ENCODE measurements at regions of chr1 and their contacts with region 1.

Region 1: GRCh38 chr1:10387413-10388079 is 11.3 kb upstream of the PGD start:
- DNase-seq: no peak
- H3K4me3 ChIP-seq: peak overlapping the region in 1 of 2 experiments; percentile 51; a peak in 2 of 4 replicates
- H3K27ac ChIP-seq: peak overlapping the region; percentile 54 to 90
- H3K4me1 ChIP-seq: peaks cover 0 to 9% of the 10 kb centered on the region in 2 experiments; a peak in 1 of 4 replicates
- H3K27me3 ChIP-seq: no peaks in the 10 kb centered on the region
- CTCF ChIP-seq: peak; percentile 28; the same call in 1 of the 2 replicates
- EP300 ChIP-seq: no peak
- RAD21 ChIP-seq: no peak

Region 2: DNA sequence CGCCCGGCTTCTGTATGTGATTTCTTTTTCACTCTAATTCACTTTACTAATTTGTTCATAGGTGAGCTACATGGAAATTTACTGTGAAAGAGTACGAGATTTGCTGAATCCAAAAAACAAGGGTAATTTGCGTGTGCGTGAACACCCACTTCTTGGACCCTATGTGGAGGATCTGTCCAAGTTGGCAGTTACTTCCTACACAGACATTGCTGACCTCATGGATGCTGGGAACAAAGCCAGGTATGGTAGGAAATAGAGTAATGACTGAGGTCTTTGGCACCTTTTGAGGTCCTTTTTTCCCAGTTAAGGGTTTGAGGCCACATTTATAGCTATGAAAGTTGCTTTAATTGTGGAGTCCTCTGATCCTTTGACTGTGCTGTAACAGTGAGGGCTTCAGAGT is 120.2 kb before region 1 on chr1:
- CTCF ChIA-PET with region 1: no interaction called
- POLR2A ChIA-PET with region 1: no interaction called
- DNase-seq: no peak
- H3K4me3 ChIP-seq: no peak overlapping the region
- H3K27ac ChIP-seq: no peak overlapping the region
- H3K4me1 ChIP-seq: no peaks in the 10 kb centered on the region
- H3K27me3 ChIP-seq: no peaks in the 10 kb centered on the region
- CTCF ChIP-seq: no peak
- EP300 ChIP-seq: no peak
- RAD21 ChIP-seq: no peak

Region 3: GRCh38 chr1:10368194-10368593 is 19.4 kb before region 1 on chr1:
- CTCF ChIA-PET with region 1: no interaction called
- POLR2A ChIA-PET with region 1: no interaction called
- DNase-seq: no peak
- H3K4me3 ChIP-seq: no peak overlapping the region
- H3K27ac ChIP-seq: no peak overlapping the region
- H3K4me1 ChIP-seq: no peaks in the 10 kb centered on the region
- H3K27me3 ChIP-seq: no peaks in the 10 kb centered on the region
- CTCF ChIP-seq: no peak
- EP300 ChIP-seq: no peak
- RAD21 ChIP-seq: no peak

Region 4: DNA sequence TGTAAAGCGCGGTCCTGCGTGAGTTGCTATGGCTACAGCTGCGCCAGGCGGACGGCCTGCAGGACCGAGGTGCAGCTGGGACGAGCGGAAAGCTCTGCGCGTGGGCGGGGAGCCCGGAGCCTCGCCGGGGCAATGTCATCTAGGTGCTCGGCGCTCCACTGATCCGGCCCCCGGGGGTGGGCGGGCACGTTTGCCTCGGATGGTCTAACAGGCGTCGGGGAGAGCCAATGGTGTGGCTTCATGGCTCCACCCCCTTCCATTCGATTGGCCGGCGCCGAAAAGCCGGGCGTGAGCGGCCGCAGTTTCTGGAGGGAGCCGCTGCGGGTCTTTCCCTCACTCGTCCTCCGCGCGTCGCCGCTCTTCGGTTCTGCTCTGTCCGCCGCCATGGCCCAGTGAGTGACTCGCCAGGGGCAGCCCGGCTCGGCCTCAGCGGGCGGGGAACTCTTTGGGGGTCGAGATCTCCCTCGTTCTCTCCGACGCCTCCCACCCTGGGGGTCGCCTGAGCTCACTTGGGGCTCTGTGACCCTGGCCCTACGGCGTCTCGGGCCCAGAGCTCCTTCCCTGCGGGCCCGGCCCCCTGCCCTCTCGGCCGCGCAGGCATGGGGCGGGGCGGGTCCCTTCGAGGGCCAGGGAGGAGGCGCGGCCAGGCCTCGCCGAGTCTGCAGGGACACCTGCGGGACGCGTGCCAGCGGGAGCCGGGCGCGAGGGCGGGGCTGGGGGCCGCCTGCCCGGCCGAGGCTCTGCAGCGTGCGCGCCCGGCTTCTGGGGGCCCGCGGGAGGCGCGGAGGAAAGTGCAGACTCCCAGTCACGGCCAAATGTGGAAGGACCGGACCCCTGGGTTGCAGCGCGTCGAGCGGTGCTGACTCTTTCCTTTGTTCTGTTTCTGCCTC is 11.4 kb after region 1 on chr1 and contains the start of gene PGD:
- CTCF ChIA-PET with region 1: interaction called, 18 read pairs
- POLR2A ChIA-PET with region 1: interaction called, 9 read pairs
- DNase-seq: peak; percentile 100
- H3K4me3 ChIP-seq: peak within 1 kb of the TSS; percentile 74 to 96
- H3K27ac ChIP-seq: peak within 1 kb of the TSS; percentile 85 to 88
- H3K4me1 ChIP-seq: peaks cover 8 to 25% of the 10 kb centered on the region in 2 experiments; a peak in 3 of 4 replicates
- H3K27me3 ChIP-seq: no peaks in the 10 kb centered on the region
- CTCF ChIP-seq: no peak; the same call in 1 of the 2 replicates
- EP300 ChIP-seq: peak in 1 of 2 experiments; percentile 7; a peak in 1 of 4 replicates
- RAD21 ChIP-seq: no peak
- polyA plus RNA-seq, gene PGD: 75.3 and 76.2 TPM in 2 replicates

Region 5: GRCh38 chr1:10561955-10562354 is 174.4 kb after region 1 on chr1:
- CTCF ChIA-PET with region 1: no interaction called
- POLR2A ChIA-PET with region 1: no interaction called
- DNase-seq: no peak
- H3K4me3 ChIP-seq: no peak overlapping the region
- H3K27ac ChIP-seq: no peak overlapping the region
- H3K4me1 ChIP-seq: no peaks in the 10 kb centered on the region
- H3K27me3 ChIP-seq: no peaks in the 10 kb centered on the region
- CTCF ChIP-seq: peak; percentile 30; the same call in 1 of the 2 replicates
- EP300 ChIP-seq: no peak
- RAD21 ChIP-seq: no peak

Region 6: DNA sequence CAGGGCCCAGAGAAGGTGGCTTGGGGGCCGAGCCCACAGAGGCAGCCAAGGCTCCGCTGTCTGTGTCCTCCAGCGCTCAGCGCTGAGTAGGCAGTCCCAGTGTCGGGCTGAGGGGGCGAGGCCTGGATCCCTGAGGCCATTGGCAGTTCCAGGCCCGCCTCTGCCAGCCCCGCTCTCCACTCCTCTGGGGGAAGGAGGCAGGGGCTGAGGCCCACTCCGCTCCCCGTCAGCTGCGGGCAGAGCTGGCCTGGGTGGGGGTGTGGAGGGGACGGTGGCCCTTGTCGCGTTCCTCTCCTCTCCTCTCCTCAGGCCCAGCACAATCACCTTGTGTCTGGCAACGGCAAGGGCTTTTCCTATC is 276.1 kb after region 1 on chr1:
- CTCF ChIA-PET with region 1: no interaction called
- POLR2A ChIA-PET with region 1: no interaction called
- DNase-seq: peak; percentile 95
- H3K4me3 ChIP-seq: no peak overlapping the region
- H3K27ac ChIP-seq: 0 out of 4 replicates have a peak overlapping the region, but pooled peaks of 1 of the 2 experiments have one; percentile 17
- H3K4me1 ChIP-seq: peaks cover 0 to 41% of the 10 kb centered on the region in 2 experiments; a peak in 1 of 4 replicates
- H3K27me3 ChIP-seq: no peaks in the 10 kb centered on the region
- CTCF ChIP-seq: no peak
- EP300 ChIP-seq: no peak
- RAD21 ChIP-seq: no peak

Measured in SK-N-SH (cell line).